ENCODE measurements at regions of chr19 and their contacts with region 1.

Region 1: DNA sequence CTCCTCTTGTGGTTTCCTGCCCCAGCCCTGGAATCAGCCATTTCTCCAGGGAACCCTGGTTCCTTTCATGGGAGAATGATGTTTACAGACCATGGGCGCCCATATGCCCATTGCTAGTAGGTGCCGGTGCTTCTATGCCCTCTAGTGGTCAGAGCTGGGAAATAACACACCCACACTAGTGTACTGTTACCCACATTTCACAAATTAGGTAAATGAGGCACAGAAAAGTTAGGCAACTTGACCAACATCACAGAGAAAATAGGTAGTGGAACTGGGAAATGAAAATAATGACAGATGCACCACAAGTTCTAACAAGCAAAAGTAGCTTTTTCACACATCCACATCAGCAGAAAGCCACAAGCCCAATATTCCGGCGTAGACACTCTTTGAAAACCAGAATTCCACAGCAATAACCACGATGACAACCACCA is 1.3 kb upstream of the CEACAM3 start:
- DNase-seq: peak; percentile 24 to 71 (median 52)
- ATAC-seq: peak; percentile 95
- H3K4me3 ChIP-seq: no peak overlapping the region
- H3K4me3 Mint-ChIP-seq: no peak overlapping the region
- H3K27ac ChIP-seq: no peak overlapping the region
- H3K27ac Mint-ChIP-seq: no peak overlapping the region
- H3K4me1 ChIP-seq: no peaks in the 10 kb centered on the region
- H3K4me1 Mint-ChIP-seq: peaks cover 0 to 8% (median 2%) of the 10 kb centered on the region in 7 donors
- H3K27me3 ChIP-seq: no peaks in the 10 kb centered on the region
- H3K27me3 Mint-ChIP-seq: peaks cover 12 to 42% (median 27%) of the 10 kb centered on the region in 5 donors

Region 2: DNA sequence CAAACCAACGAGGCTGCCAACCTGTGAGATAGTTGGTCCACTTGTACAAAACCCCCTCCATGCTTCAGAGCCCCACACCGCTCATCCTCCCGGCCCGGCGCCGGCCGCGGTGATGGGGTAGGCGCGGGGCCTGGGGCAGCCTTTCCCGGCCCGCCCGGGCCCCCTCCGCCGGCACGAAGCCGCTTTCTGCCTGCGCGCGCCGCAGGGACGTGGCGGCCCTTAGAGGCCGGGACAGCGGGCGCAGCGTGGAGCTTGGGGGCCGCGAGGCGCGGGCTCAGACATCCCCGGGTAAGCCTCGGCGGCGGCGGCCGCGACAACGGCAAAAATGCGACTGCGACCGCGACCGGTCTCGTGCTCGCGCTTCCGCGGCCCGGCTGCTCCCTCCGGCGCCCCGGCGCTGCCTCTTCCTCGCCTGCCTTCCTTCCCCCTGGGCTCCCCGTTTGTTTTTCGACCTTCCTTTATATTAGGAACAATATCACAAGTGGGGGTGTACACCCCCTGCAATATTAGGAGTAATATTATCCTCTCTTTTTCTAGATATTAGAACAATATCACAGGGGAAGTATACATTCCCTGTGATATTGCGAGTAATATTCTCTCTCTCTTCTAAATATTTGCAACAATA is 273.0 kb before region 1 on chr19:
- CTCF ChIA-PET with region 1: no interaction called
- POLR2A ChIA-PET with region 1: no interaction called
- intact Hi-C with region 1: no loop called
- DNase-seq: peak in 8 of 9 donors; percentile 31 to 50 (median 44)
- ATAC-seq: peak; percentile 69
- H3K4me3 ChIP-seq: peak overlapping the region; percentile 63
- H3K4me3 Mint-ChIP-seq: peak overlapping the region; percentile 85 to 95 (median 91)
- H3K27ac ChIP-seq: peak overlapping the region; percentile 73
- H3K27ac Mint-ChIP-seq: peak overlapping the region; percentile 85 to 97 (median 92)
- H3K4me1 ChIP-seq: peaks cover 6% of the 10 kb centered on the region in 2 donors
- H3K4me1 Mint-ChIP-seq: peaks cover 20 to 29% (median 25%) of the 10 kb centered on the region in 7 donors
- H3K27me3 ChIP-seq: no peaks in the 10 kb centered on the region
- H3K27me3 Mint-ChIP-seq: peaks cover 0 to 49% (median 17%) of the 10 kb centered on the region in 5 donors

Region 3: DNA sequence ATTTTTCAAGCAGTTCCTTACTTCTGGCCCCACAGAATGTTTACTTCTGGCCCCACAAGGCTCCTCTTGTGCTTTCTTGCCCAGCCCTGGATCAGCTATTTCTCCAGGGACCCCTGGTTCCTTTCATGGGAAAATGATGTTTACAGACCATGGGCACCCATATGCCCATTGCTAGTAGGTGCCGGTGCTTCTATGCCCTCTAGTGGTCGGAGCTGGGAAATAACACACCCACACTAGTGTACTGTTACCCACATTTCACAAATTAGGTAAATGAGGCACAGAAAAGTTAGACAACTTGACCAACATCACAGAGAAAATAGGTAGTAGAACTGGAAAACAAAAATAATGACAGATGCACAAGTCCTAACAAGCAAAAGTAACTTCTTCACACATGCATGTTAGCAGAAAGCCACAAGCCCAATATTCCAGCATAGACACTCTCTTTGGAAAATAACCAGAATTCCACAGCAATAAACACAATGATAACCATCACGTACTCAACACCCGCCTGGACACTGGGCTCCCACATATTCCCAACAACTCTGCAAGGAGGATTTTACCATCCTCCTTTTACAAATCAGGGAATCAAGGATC is 41.0 kb before region 1 on chr19:
- CTCF ChIA-PET with region 1: interaction called, 15 read pairs
- POLR2A ChIA-PET with region 1: no interaction called
- intact Hi-C with region 1: no loop called
- DNase-seq: peak; percentile 43 to 76 (median 63)
- ATAC-seq: peak; percentile 95
- H3K4me3 ChIP-seq: no peak overlapping the region
- H3K4me3 Mint-ChIP-seq: no peak overlapping the region
- H3K27ac ChIP-seq: no peak overlapping the region
- H3K27ac Mint-ChIP-seq: peak overlapping the region in 2 of 9 donors; percentile 5 to 85
- H3K4me1 ChIP-seq: no peaks in the 10 kb centered on the region
- H3K4me1 Mint-ChIP-seq: peaks cover 4 to 6% (median 5%) of the 10 kb centered on the region in 7 donors
- H3K27me3 ChIP-seq: no peaks in the 10 kb centered on the region
- H3K27me3 Mint-ChIP-seq: peaks cover 20 to 57% (median 30%) of the 10 kb centered on the region in 5 donors

Region 4: GRCh38 chr19:41821003-41821735 is 26.1 kb after region 1 on chr19:
- CTCF ChIA-PET with region 1: interaction called, 28 read pairs
- POLR2A ChIA-PET with region 1: interaction called, 5 read pairs
- intact Hi-C with region 1: loop called (anchors 1 kb)
- DNase-seq: peak in 8 of 9 donors; percentile 41 to 68 (median 59)
- ATAC-seq: peak; percentile 91
- H3K4me3 ChIP-seq: no peak overlapping the region
- H3K4me3 Mint-ChIP-seq: no peak overlapping the region
- H3K27ac ChIP-seq: no peak overlapping the region
- H3K27ac Mint-ChIP-seq: no peak overlapping the region
- H3K4me1 ChIP-seq: no peaks in the 10 kb centered on the region
- H3K4me1 Mint-ChIP-seq: peaks cover 0 to 6% (median 0%) of the 10 kb centered on the region in 7 donors
- H3K27me3 ChIP-seq: no peaks in the 10 kb centered on the region
- H3K27me3 Mint-ChIP-seq: peaks cover 8 to 46% (median 17%) of the 10 kb centered on the region in 5 donors

Region 5: DNA sequence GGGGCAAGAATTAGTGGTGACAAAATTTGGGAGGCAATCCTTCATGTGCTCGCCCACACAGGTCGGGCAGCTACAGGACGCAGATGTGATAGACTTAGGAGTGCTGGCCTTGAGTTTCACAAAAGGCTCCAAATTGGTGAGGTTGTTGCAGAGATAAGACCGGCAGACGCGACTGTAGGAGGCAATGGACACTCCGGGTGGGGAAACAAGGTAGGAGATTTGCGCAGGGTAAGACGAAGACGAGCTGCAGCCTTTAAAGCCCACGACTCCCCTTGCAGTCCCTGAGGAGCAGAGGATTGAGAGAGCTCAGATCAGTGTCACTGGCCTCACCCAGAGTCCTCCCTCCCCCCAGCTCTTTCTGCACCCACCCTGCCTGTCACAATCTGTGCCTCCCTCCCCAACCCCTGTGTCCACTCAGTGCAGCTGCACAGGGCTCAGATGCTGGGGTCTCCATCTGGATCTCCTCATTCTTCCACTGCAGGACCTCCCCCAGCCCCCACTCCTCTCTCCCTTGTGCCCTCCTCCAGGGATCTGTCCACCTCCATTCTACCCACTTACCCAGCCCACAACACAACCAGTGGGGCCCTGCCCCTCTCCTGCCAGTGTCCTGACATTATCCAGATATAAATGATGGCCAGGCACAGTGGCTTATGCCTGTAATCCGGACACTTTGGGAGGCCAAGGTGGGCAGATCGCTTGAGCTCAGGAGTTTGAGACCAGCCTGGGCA is 43.1 kb after region 1 on chr19:
- CTCF ChIA-PET with region 1: interaction called, 12 read pairs
- POLR2A ChIA-PET with region 1: no interaction called
- intact Hi-C with region 1: loop called in 1 of 2 experiments (anchors 5 kb)
- DNase-seq: no peak
- ATAC-seq: no peak
- H3K4me3 ChIP-seq: no peak overlapping the region
- H3K4me3 Mint-ChIP-seq: no peak overlapping the region
- H3K27ac ChIP-seq: no peak overlapping the region
- H3K27ac Mint-ChIP-seq: no peak overlapping the region
- H3K4me1 ChIP-seq: no peaks in the 10 kb centered on the region
- H3K4me1 Mint-ChIP-seq: peaks cover 0 to 7% (median 0%) of the 10 kb centered on the region in 7 donors
- H3K27me3 ChIP-seq: no peaks in the 10 kb centered on the region
- H3K27me3 Mint-ChIP-seq: peaks cover 0 to 45% (median 14%) of the 10 kb centered on the region in 5 donors

Region 6: GRCh38 chr19:41951686-41952172 is 156.7 kb after region 1 on chr19:
- CTCF ChIA-PET with region 1: interaction called, 10 read pairs
- POLR2A ChIA-PET with region 1: no interaction called
- intact Hi-C with region 1: loop called (anchors 1 kb)
- DNase-seq: peak; percentile 63 to 93 (median 78)
- ATAC-seq: peak; percentile 95
- H3K4me3 ChIP-seq: no peak overlapping the region
- H3K4me3 Mint-ChIP-seq: peak overlapping the region in 2 of 10 donors; percentile 54 to 67
- H3K27ac ChIP-seq: peak overlapping the region; percentile 15
- H3K27ac Mint-ChIP-seq: peak overlapping the region in 8 of 9 donors; percentile 48 to 89 (median 63)
- H3K4me1 ChIP-seq: peaks cover 0 to 15% of the 10 kb centered on the region in 2 donors
- H3K4me1 Mint-ChIP-seq: peaks cover 11 to 19% (median 12%) of the 10 kb centered on the region in 7 donors
- H3K27me3 ChIP-seq: no peaks in the 10 kb centered on the region
- H3K27me3 Mint-ChIP-seq: no peaks in the 10 kb centered on the region

Region 7: GRCh38 chr19:42032431-42032830 is 237.4 kb after region 1 on chr19:
- CTCF ChIA-PET with region 1: interaction called, 3 read pairs
- POLR2A ChIA-PET with region 1: no interaction called
- intact Hi-C with region 1: loop called in 1 of 2 experiments (anchors 2 kb)
- DNase-seq: no peak
- ATAC-seq: no peak
- H3K4me3 ChIP-seq: no peak overlapping the region
- H3K4me3 Mint-ChIP-seq: no peak overlapping the region
- H3K27ac ChIP-seq: no peak overlapping the region
- H3K27ac Mint-ChIP-seq: peak overlapping the region in 1 of 9 donors; percentile 88
- H3K4me1 ChIP-seq: no peaks in the 10 kb centered on the region
- H3K4me1 Mint-ChIP-seq: peaks cover 0 to 8% (median 0%) of the 10 kb centered on the region in 7 donors
- H3K27me3 ChIP-seq: no peaks in the 10 kb centered on the region
- H3K27me3 Mint-ChIP-seq: peaks cover 0 to 11% (median 6%) of the 10 kb centered on the region in 5 donors

Measured in naive thymus-derived CD4-positive, alpha-beta T cell (primary cell).